A549 (cell line): ENCODE measurements at regions of chr7 and their contacts with region 1.

Region 1: DNA sequence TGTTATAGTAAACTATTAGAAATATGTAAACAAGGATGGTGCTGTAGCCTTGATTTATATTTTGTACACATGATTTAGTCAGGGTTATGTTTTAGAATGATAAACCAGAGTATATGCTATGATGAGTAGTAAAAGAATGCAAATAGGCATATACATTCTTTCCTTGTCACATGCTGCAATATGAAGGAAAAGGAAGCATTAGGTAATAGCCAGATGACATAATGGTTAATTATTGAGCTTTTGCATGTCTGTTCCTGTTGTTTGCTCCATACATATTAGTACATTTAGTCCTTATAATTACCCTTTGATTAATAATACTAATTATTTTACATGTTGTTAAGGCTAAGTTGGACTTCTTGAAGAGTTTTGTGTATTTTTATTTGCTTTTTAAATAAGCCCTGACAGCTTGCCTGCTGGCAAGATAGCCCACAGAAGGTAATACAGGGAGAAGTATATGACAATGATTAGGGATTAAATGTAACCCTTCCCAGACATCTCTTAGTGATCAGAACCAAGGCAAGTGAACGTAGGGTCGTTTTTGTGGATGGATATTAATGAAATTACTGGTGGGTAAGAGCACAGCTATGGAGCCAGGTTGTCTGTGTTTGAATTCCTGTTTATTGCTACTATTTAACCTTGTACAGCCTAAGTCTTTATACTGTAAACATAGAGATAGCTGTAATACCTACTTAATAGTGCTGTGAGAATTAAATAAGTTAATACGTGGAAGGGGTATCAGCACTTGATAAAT is 68.4 kb downstream of the PHTF2 start:
- DNase-seq: peak; percentile 25 to 39
- ATAC-seq: peak; percentile 90 to 93
- H3K4me3 ChIP-seq: no peak overlapping the region; the same call in 2 of the 3 replicates
- H3K27ac ChIP-seq: peak overlapping the region; percentile 70 to 80
- H3K4me1 ChIP-seq: peaks cover 22% of the 10 kb centered on the region
- CTCF ChIP-seq: no peak
- EP300 ChIP-seq: no peak
- POLR2A ChIP-seq: no peak
- RAD21 ChIP-seq: no peak

Region 2: GRCh38 chr7:77798394-77799077 is 68.4 kb before region 1 on chr7 and contains the starts of genes PHTF2 and TMEM60:
- CTCF ChIA-PET with region 1: interaction called, 11 read pairs
- POLR2A ChIA-PET with region 1: interaction called, 4 read pairs
- DNase-seq: peak; percentile 97 to 99
- ATAC-seq: peak; percentile 93 to 96
- H3K4me3 ChIP-seq: peak within 1 kb of the TSS; percentile 98
- H3K27ac ChIP-seq: peak within 1 kb of the TSS; percentile 92 to 94
- H3K4me1 ChIP-seq: peaks cover 24% of the 10 kb centered on the region
- CTCF ChIP-seq: peak; percentile 36
- EP300 ChIP-seq: no peak
- POLR2A ChIP-seq: peak; percentile 34
- RAD21 ChIP-seq: peak; percentile 28 to 66; a peak in 4 of 5 replicates
- polyA plus RNA-seq, gene PHTF2: 35.5 and 41.6 TPM in 2 replicates
- polyA plus RNA-seq, gene TMEM60: 42.8 and 54.7 TPM in 2 replicates

Region 3: GRCh38 chr7:77877791-77878190 is 10.8 kb after region 1 on chr7:
- CTCF ChIA-PET with region 1: no interaction called
- POLR2A ChIA-PET with region 1: no interaction called
- DNase-seq: no peak
- ATAC-seq: no peak
- H3K4me3 ChIP-seq: no peak overlapping the region
- H3K27ac ChIP-seq: no peak overlapping the region
- H3K4me1 ChIP-seq: no peaks in the 10 kb centered on the region
- CTCF ChIP-seq: no peak
- EP300 ChIP-seq: no peak
- POLR2A ChIP-seq: no peak
- RAD21 ChIP-seq: no peak